ENCODE measurements at regions of chrX and their contacts with region 1.

Region 1: DNA sequence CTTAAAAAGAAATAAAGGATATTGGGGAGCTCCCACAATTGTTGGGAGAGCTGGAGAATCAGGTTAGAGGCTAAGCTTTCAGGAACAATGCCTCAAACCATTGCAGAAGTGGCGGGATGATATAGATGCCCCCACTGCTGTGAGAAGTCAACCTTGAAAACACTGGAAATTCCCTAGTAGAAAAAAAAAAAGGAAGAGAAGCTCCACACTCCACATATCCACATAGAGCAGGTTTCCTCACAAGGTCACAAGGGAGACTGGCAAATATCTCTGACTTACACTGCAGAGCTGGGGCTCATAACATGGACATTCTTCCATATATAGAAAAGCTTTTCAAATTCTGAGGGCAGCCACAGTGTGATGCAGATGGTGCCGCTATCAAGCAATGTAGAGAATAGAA is 22.7 kb upstream of the OGT start:
- DNase-seq: no peak
- ATAC-seq: no peak
- H3K4me3 ChIP-seq: no peak overlapping the region
- H3K4me3 Mint-ChIP-seq: no peak overlapping the region
- H3K27ac ChIP-seq: no peak overlapping the region
- H3K27ac Mint-ChIP-seq: no peak overlapping the region
- H3K4me1 ChIP-seq: no peaks in the 10 kb centered on the region
- H3K4me1 Mint-ChIP-seq: peaks cover 7 to 13% (median 7%) of the 10 kb centered on the region in 3 donors
- H3K27me3 ChIP-seq: no peaks in the 10 kb centered on the region
- H3K27me3 Mint-ChIP-seq: no peaks in the 10 kb centered on the region

Region 2: DNA sequence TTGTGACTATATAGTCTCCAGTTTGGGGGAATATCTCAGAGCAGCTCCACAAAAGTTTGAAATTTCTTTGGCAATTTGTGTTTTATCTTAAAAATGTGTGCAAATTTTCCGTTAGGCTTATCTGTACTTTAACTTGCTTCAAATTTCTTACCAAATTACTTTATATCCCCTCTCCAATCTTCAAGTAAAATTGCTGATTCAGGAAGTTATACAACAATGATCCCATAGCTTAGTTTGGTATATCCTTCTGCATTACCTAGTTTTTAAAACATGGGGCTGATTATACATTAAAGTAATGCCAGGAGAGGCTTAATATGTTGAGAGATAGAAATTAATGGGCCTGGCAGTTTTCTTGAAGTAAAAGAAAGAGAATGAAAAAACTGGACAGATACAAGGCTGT is 77.4 kb before region 1 on chrX:
- CTCF ChIA-PET with region 1: no interaction called
- POLR2A ChIA-PET with region 1: interaction called in 1 of 2 experiments, 12 read pairs
- DNase-seq: no peak
- ATAC-seq: no peak
- H3K4me3 ChIP-seq: no peak overlapping the region
- H3K4me3 Mint-ChIP-seq: no peak overlapping the region
- H3K27ac ChIP-seq: no peak overlapping the region
- H3K27ac Mint-ChIP-seq: no peak overlapping the region
- H3K4me1 ChIP-seq: no peaks in the 10 kb centered on the region
- H3K4me1 Mint-ChIP-seq: no peaks in the 10 kb centered on the region
- H3K27me3 ChIP-seq: no peaks in the 10 kb centered on the region
- H3K27me3 Mint-ChIP-seq: peaks cover 0 to 5% of the 10 kb centered on the region in 2 donors

Region 3: GRCh38 chrX:71671043-71671780 is 161.1 kb after region 1 on chrX:
- CTCF ChIA-PET with region 1: no interaction called
- POLR2A ChIA-PET with region 1: no interaction called
- DNase-seq: peak in 3 of 35 experiments; percentile 10 to 15 (median 12)
- ATAC-seq: peak in 3 of 4 experiments; percentile 37 to 45 (median 43)
- H3K4me3 ChIP-seq: no peak overlapping the region
- H3K4me3 Mint-ChIP-seq: peak overlapping the region in 1 of 3 donors; percentile 45
- H3K27ac ChIP-seq: no peak overlapping the region
- H3K27ac Mint-ChIP-seq: no peak overlapping the region
- H3K4me1 ChIP-seq: peaks cover 0 to 18% of the 10 kb centered on the region in 2 experiments
- H3K4me1 Mint-ChIP-seq: peaks cover 20 to 21% (median 21%) of the 10 kb centered on the region in 3 donors
- H3K27me3 ChIP-seq: no peaks in the 10 kb centered on the region
- H3K27me3 Mint-ChIP-seq: no peaks in the 10 kb centered on the region